Transverse colon (tissue), 4 donors: ENCODE measurements at regions of chr19 and their contacts with region 1.

Region 1: DNA sequence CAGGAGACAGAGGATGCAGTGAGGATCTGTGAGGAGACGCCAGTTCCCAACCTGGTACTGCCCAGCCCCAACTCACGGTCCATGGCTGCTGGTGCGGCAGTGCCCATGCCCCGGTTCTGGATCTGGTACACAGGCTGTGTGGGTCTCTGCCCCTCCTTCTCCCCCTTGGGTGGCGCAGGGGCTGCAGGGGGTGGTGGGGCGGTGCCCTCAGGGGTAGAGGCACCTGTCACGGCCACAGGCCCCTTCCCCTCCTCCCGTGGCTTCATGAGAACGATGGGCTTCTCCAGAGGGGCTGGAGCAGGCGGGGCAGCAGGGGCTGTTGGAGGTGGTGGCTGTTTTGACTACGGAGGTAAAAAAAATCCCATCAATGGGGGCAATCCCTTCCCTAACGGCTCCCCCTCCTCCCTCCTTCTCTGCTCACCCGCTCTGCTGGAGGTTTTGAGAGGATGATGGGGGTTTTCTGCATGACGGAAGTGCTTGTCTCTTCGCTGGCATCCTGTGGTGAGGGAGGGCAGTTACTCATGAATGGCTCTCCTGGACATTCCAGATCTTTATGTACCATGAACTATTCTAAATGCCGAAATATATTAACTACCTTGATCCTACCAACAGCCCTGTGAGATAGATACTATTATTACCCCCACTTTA is 7.1 kb downstream of the SMG9 start:
- DNase-seq: no peak
- H3K4me3 ChIP-seq: no peak overlapping the region
- H3K27ac ChIP-seq: no peak overlapping the region
- H3K4me1 ChIP-seq: peaks cover under 1 to 25% (median 8%) of the 10 kb centered on the region in 4 donors
- H3K27me3 ChIP-seq: no peaks in the 10 kb centered on the region
- CTCF ChIP-seq: no peak
- EP300 ChIP-seq: no peak
- POLR2A ChIP-seq: no peak

Region 2: GRCh38 chr19:43700395-43701000 is 47.2 kb before region 1 on chr19:
- in situ Hi-C with region 1: no loop called
- intact Hi-C with region 1: no loop called
- DNase-seq: peak; percentile 51
- H3K4me3 ChIP-seq: peak overlapping the region in 3 of 4 donors; percentile 3 to 36 (median 13)
- H3K27ac ChIP-seq: peak overlapping the region; percentile 79 to 89 (median 84)
- H3K4me1 ChIP-seq: peaks cover 3 to 27% (median 22%) of the 10 kb centered on the region in 4 donors
- H3K27me3 ChIP-seq: peaks cover 10% of the 10 kb centered on the region
- CTCF ChIP-seq: no peak
- EP300 ChIP-seq: no peak
- POLR2A ChIP-seq: no peak

Region 3: GRCh38 chr19:43784981-43785808 is 37.5 kb after region 1 on chr19:
- in situ Hi-C with region 1: loop called in 2 of 4 experiments (anchors 5 kb)
- intact Hi-C with region 1: loop called (anchors 5 kb)
- DNase-seq: peak; percentile 70
- H3K4me3 ChIP-seq: no peak overlapping the region
- H3K27ac ChIP-seq: peak overlapping the region; percentile 44 to 67 (median 50)
- H3K4me1 ChIP-seq: peaks cover 14 to 35% (median 23%) of the 10 kb centered on the region in 4 donors
- H3K27me3 ChIP-seq: no peaks in the 10 kb centered on the region
- CTCF ChIP-seq: peak; percentile 97 to 99 (median 97)
- EP300 ChIP-seq: no peak
- POLR2A ChIP-seq: no peak